Posterior cingulate gyrus (tissue), 11 donors: ENCODE measurements at regions of chr5 and their contacts with region 1.

Region 1: DNA sequence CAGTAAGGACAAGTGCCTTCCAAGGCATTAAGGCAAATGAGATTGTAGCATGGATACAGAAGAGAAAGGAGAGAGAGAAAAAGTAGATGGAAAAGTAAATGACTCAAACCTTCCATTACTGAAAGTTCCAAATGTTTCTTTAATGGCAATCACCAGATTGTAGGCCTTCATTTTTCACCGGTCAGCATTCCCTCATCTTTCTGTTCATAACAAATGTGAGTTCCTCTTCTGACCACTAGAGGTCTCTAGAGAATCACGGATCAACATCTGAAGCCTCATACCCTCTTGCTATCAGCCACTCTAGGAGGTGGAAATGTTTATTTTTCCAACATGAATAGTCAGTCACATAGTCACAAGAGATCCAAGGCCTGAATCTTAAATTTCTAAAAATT is 73.6 kb upstream of the RPS23 start:
- DNase-seq: no peak

Region 2: DNA sequence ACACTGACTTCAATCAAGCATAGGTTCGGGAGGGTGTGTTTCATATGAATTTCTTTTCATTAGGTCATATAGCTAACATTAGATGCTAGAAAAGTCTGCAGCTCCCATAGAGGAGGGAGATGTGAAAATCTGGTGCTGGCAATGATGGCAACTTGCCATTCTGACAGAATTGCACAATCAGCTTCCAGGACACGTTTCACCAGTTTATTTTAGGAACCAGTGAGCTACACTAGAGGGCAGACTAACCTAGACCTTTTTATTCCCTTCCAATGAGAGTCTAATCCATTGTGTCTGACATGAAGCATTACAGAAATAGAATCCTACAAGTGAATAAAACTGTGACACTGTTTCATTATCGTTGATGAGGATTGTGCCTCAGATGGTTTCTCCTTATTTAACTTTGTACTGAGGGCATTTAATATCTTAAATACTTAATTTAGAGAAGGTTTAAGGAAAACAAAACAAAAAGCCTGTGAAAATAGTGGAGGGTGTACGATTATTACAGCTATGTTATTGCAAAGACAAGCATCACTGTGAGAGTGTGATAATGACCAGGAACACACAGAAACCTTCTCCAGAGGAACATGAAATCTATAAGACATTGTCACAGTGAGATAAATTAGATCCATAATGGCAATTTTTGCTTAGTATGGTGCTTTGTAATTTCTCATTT is 289.7 kb after region 1 on chr5:
- intact Hi-C with region 1: loop called (anchors 10 kb)
- DNase-seq: peak in 7 of 10 donors; percentile 13 to 86 (median 43)